Naive thymus-derived CD4-positive, alpha-beta T cell (primary cell): ENCODE measurements at regions of chr3 and their contacts with region 1.

Region 1: DNA sequence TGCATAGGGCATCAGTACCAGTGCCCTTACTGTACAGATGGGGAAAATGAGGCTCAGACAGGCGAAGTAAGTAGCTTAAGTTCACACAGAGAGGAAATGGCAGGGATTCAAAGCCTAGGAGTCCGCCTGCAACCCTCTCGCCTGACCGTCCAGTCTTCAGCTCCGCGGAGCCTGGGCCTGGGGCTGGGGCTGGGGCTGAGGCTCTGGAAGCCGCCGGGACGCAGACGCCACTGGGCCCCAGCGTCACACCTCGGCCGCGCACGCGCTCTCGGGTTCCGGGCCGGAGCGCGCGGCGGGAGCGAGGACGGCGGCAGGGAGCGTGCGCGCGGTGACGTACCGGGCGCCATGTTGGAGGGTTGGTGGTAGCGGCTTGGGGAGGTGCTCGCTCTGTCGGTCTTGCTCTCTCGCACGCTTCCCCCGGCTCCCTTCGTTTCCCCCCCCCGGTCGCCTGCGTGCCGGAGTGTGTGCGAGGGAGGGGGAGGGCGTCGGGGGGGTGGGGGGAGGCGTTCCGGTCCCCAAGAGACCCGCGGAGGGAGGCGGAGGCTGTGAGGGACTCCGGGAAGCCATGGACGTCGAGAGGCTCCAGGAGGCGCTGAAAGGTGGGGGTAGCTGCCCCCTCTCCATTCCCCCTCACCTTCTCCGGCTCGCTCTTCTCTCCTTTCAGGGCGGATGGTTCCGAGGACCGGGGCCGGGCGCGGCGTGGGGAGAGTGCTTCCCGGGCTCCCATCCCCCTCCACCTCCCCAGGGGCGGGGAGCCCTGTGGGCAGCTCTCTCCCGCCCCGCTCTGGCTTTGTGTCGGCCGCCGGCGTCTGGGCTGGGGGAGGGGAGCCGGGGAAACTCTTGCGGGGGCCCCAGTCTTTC is at the start of gene PPP4R2:
- DNase-seq: peak; percentile 90 to 96 (median 94)
- ATAC-seq: peak; percentile 94
- H3K4me3 ChIP-seq: peak within 1 kb of the TSS; percentile 76
- H3K4me3 Mint-ChIP-seq: peak within 1 kb of the TSS; percentile 84 to 95 (median 92)
- H3K27ac ChIP-seq: peak within 1 kb of the TSS; percentile 97
- H3K27ac Mint-ChIP-seq: peak within 1 kb of the TSS; percentile 69 to 97 (median 88)
- H3K4me1 ChIP-seq: peaks cover 26 to 36% of the 10 kb centered on the region in 2 donors
- H3K4me1 Mint-ChIP-seq: peaks cover 30 to 51% (median 44%) of the 10 kb centered on the region in 7 donors
- H3K27me3 ChIP-seq: no peaks in the 10 kb centered on the region
- H3K27me3 Mint-ChIP-seq: no peaks in the 10 kb centered on the region
- total RNA-seq, gene PPP4R2: 56.3 to 87.0 (median 63.8) TPM

Region 2: DNA sequence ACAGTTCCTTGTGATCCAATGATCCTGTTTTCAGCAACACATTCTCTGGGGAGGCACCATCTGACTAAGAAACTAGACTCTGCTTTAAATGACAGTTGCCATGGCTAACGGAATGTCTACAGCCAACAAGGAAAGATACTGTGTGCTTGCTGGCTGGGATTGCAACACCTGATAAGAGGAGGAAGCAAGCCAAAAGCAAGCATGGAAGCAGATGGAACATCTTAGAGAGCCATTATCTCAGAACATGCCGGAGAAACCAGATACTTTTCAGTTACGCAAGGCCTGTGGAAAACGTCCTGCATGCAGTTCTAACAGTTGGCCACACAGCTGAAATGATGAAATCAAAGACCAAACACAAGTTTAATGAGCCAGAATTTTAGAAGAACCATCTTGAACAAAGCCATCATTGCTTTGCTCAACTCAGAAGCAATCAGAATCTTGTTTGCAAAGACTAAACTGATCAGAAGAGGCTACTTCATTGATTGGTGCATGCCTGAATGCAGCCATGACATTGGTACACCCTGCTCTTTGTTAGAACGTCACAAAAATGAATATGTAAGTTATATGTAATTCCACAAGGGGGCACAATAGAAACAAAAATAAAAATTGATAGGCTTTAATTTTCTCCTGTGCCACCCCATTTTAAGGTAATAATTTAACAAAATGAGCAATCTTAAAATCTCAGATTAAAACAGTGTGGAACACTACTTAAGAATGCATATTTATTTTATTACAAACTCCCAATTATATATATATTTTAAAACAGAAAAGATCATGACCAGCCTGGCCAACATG is 58.0 kb before region 1 on chr3:
- CTCF ChIA-PET with region 1: no interaction called
- POLR2A ChIA-PET with region 1: no interaction called
- intact Hi-C with region 1: loop called (anchors 1 kb)
- DNase-seq: peak in 7 of 9 donors; percentile 48 to 76 (median 62)
- ATAC-seq: peak; percentile 99
- H3K4me3 ChIP-seq: no peak overlapping the region
- H3K4me3 Mint-ChIP-seq: no peak overlapping the region
- H3K27ac ChIP-seq: no peak overlapping the region
- H3K27ac Mint-ChIP-seq: no peak overlapping the region
- H3K4me1 ChIP-seq: no peaks in the 10 kb centered on the region
- H3K4me1 Mint-ChIP-seq: no peaks in the 10 kb centered on the region
- H3K27me3 ChIP-seq: no peaks in the 10 kb centered on the region
- H3K27me3 Mint-ChIP-seq: peaks cover 0 to 28% (median 0%) of the 10 kb centered on the region in 5 donors

Region 3: DNA sequence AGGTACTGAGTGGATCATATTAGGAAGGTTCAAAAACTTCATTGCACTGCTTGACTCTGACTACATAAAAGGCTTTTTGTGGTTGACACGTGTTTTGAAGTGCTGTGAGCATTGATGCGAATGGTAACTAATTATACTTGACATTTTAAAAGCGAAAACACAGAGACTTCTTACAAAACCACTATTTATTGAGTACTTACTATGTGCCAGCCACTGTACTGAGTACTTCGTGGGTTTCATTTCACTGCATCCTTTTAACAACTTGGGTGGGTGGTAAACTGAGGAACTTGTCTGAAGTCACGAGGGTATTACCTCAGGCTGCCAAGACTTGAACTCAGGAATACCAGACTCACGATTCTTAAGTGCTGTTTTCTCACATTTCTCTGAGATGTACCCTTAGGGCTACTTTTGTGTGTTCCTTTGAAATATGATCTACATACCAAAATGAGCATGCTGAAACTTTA is 45.4 kb before region 1 on chr3:
- CTCF ChIA-PET with region 1: no interaction called
- POLR2A ChIA-PET with region 1: no interaction called
- intact Hi-C with region 1: no loop called
- DNase-seq: peak in 2 of 9 donors; percentile 15 to 27
- ATAC-seq: no peak
- H3K4me3 ChIP-seq: no peak overlapping the region
- H3K4me3 Mint-ChIP-seq: peak overlapping the region in 2 of 10 donors; percentile 13 to 17
- H3K27ac ChIP-seq: no peak overlapping the region
- H3K27ac Mint-ChIP-seq: no peak overlapping the region
- H3K4me1 ChIP-seq: no peaks in the 10 kb centered on the region
- H3K4me1 Mint-ChIP-seq: peaks cover 0 to 17% (median 11%) of the 10 kb centered on the region in 7 donors
- H3K27me3 ChIP-seq: no peaks in the 10 kb centered on the region
- H3K27me3 Mint-ChIP-seq: peaks cover 0 to 7% (median 0%) of the 10 kb centered on the region in 5 donors

Region 4: DNA sequence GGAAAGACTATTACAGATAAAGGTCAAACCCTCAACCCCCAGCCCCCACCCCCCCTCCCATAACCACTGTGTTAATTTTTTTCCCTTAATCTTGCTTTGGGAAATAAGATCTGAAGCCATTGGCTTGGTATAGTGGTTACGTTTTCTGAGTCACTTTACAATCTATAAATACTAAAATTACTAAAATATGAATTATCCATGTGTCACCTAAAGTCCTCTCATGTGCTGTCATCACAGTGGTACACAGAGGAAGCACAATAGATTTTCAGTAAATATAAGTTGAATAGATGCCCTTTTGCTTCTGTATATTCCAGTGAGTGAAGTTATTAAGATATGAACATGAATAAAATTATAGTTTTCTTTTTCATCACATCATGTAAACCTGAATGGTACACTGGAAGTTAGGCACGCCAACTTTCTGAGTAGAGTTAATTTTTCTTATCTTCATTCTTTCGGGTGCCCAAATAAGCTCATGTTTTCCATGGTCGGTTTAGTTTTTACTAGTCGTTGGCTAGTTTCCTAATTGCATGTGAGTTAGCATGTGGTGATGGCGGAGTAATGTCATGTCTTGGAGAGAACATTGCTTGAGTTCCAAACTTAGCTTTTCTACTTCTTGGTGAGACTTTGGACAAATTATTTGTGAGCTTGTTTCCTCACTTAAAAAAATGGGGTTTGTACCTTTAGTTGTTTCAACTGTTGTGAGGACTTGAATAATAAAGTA is 11.4 kb after region 1 on chr3:
- CTCF ChIA-PET with region 1: interaction called, 4 read pairs
- POLR2A ChIA-PET with region 1: interaction called, 4 read pairs
- intact Hi-C with region 1: loop called in 1 of 2 experiments (anchors 2 kb)
- DNase-seq: no peak
- ATAC-seq: no peak
- H3K4me3 ChIP-seq: no peak overlapping the region
- H3K4me3 Mint-ChIP-seq: peak overlapping the region in 7 of 10 donors; percentile 2 to 71 (median 43)
- H3K27ac ChIP-seq: no peak overlapping the region
- H3K27ac Mint-ChIP-seq: peak overlapping the region in 4 of 9 donors; percentile 10 to 57 (median 26)
- H3K4me1 ChIP-seq: peaks cover 11 to 18% of the 10 kb centered on the region in 2 donors
- H3K4me1 Mint-ChIP-seq: peaks cover 64 to 98% (median 91%) of the 10 kb centered on the region in 7 donors
- H3K27me3 ChIP-seq: no peaks in the 10 kb centered on the region
- H3K27me3 Mint-ChIP-seq: no peaks in the 10 kb centered on the region

Region 5: GRCh38 chr3:73041537-73041936 is 44.8 kb after region 1 on chr3:
- CTCF ChIA-PET with region 1: no interaction called
- POLR2A ChIA-PET with region 1: no interaction called
- intact Hi-C with region 1: loop called in 1 of 2 experiments (anchors 5 kb)
- DNase-seq: no peak
- ATAC-seq: no peak
- H3K4me3 ChIP-seq: no peak overlapping the region
- H3K4me3 Mint-ChIP-seq: peak overlapping the region in 2 of 10 donors; percentile 12 to 17
- H3K27ac ChIP-seq: no peak overlapping the region
- H3K27ac Mint-ChIP-seq: peak overlapping the region in 4 of 9 donors; percentile 6 to 43 (median 26)
- H3K4me1 ChIP-seq: peaks cover 0 to 15% of the 10 kb centered on the region in 2 donors
- H3K4me1 Mint-ChIP-seq: peaks cover 37 to 93% (median 69%) of the 10 kb centered on the region in 7 donors
- H3K27me3 ChIP-seq: no peaks in the 10 kb centered on the region
- H3K27me3 Mint-ChIP-seq: no peaks in the 10 kb centered on the region